Endothelial cell of umbilical vein (primary cell): ENCODE measurements at regions of chr1 and their contacts with region 1.

Region 1: DNA sequence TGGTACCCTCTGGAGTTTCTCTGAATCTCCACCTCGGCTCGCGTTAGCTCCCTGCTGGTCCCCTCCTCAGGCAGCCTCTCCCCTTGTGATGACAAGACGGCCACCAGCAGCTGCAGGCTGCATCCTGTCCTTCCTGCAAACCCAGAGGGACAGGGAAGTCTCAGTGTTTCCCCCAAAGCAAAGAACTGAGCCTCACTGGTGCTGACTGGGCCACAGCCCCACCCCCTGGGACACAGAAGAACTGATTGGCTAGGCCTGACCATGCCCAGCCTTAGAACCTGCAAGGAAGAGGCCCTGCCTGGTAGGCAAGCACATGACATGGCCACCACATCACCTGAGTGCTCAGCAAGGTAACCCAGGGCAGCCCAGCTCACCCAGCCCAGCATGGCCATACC is 34.6 kb downstream of the TMEM51 start:
- DNase-seq: no peak
- H3K4me3 ChIP-seq: no peak overlapping the region
- H3K27ac ChIP-seq: peak overlapping the region; percentile 68
- H3K4me1 ChIP-seq: peaks cover 17% of the 10 kb centered on the region
- H3K27me3 ChIP-seq: no peaks in the 10 kb centered on the region
- CTCF ChIP-seq: no peak
- POLR2A ChIP-seq: no peak

Region 2: DNA sequence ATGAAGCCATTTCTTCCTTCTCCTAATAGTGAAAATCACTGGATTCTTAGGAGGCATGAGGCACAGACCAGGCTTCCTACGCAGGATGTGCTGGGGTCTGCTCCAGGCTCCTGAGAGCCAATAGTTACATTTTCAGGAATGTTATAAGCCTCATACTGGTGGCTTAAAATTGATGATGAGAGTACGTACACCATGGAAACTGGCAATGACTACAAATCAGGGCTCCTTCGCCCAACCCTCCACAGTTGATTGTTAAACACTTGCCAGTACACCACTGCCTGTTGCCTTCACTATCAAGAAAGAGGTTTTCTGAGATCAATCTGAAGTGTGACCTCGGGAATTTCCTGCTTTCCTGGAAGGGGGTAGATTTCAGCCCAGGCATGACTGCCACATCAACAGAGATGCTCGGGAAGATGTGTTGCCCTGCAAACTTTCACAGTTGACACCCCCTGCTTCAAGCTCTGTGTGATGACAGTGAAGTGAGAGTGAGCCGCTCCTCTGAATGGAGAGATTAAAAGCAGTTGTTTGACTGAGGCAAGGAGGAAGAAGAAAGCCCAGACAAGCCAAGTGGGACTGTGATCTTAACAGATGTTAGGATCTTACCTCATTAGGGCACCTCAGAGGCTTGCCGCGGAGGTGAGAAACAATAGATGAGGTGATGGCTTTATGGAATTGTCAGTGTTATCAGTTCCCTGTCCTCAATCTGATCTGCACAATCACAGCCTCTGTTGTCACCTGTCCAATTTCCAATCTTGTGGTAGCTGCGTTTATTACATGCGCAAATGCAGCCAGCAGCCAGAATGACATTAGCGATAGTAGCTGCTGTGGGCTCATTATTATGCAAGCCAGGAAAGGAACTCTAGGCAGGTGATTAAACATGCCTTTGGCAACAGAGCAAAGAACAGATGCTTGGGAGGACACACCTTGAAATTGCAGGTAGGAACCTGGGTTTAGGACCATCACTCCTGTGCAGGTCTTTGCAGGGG is 312.3 kb before region 1 on chr1:
- CTCF ChIA-PET with region 1: no interaction called
- POLR2A ChIA-PET with region 1: no interaction called
- dilution Hi-C with region 1: no loop called
- intact Hi-C with region 1: no loop called
- DNase-seq: no peak
- H3K4me3 ChIP-seq: no peak overlapping the region
- H3K27ac ChIP-seq: no peak overlapping the region
- H3K4me1 ChIP-seq: no peaks in the 10 kb centered on the region
- H3K27me3 ChIP-seq: no peaks in the 10 kb centered on the region
- CTCF ChIP-seq: no peak
- POLR2A ChIP-seq: no peak

Region 3: GRCh38 chr1:15168479-15168878 is 19.6 kb before region 1 on chr1:
- CTCF ChIA-PET with region 1: no interaction called
- POLR2A ChIA-PET with region 1: no interaction called
- dilution Hi-C with region 1: no loop called
- intact Hi-C with region 1: loop called (anchors 1 kb)
- DNase-seq: peak; percentile 67
- H3K4me3 ChIP-seq: no peak overlapping the region
- H3K27ac ChIP-seq: peak overlapping the region; percentile 25
- H3K4me1 ChIP-seq: peaks cover 3% of the 10 kb centered on the region
- H3K27me3 ChIP-seq: no peaks in the 10 kb centered on the region
- CTCF ChIP-seq: no peak
- POLR2A ChIP-seq: no peak